CD8-positive, alpha-beta T cell (primary cell): ENCODE measurements at regions of chr13 and their contacts with region 1.

Region 1: GRCh38 chr13:59734393-59734792 is 429.3 kb downstream of the DIAPH3 start:
- DNase-seq: no peak
- ATAC-seq: no peak
- H3K4me3 ChIP-seq: no peak overlapping the region
- H3K4me3 Mint-ChIP-seq: no peak overlapping the region
- H3K27ac ChIP-seq: no peak overlapping the region
- H3K27ac Mint-ChIP-seq: no peak overlapping the region
- H3K4me1 ChIP-seq: no peaks in the 10 kb centered on the region
- H3K4me1 Mint-ChIP-seq: no peaks in the 10 kb centered on the region
- H3K27me3 ChIP-seq: no peaks in the 10 kb centered on the region
- H3K27me3 Mint-ChIP-seq: no peaks in the 10 kb centered on the region
- CTCF ChIP-seq: no peak

Region 2: DNA sequence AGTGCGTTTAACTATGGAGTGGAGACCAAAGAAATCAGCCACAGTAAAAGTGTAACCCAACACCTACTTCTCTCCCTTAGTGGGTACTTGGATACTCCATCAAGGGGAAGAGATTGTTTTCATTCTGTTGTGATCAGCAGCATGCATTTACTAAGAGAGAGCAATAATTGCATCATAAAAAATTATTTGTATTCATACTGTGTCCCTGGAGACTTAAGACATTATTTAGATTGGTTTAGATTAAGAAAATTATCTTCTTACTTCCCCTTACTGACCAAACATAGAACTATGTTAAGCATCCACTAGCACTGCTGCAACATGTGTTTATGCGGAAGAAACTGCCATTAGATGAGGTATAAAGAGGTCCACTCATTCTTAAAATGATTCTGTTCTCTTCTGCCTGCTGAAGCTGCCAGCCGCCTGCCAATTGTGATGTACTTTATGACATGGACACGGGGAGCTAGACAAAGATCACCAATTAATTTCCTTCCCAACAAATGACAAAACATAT is 309.1 kb before region 1 on chr13:
- CTCF ChIA-PET with region 1: no interaction called
- POLR2A ChIA-PET with region 1: no interaction called
- intact Hi-C with region 1: no loop called
- DNase-seq: no peak
- ATAC-seq: no peak
- H3K4me3 ChIP-seq: no peak overlapping the region
- H3K4me3 Mint-ChIP-seq: no peak overlapping the region
- H3K27ac ChIP-seq: no peak overlapping the region
- H3K27ac Mint-ChIP-seq: no peak overlapping the region
- H3K4me1 ChIP-seq: no peaks in the 10 kb centered on the region
- H3K4me1 Mint-ChIP-seq: no peaks in the 10 kb centered on the region
- H3K27me3 ChIP-seq: no peaks in the 10 kb centered on the region
- H3K27me3 Mint-ChIP-seq: peaks cover 4% of the 10 kb centered on the region
- CTCF ChIP-seq: no peak

Region 3: GRCh38 chr13:59706101-59706976 is 28.1 kb before region 1 on chr13:
- CTCF ChIA-PET with region 1: no interaction called
- POLR2A ChIA-PET with region 1: no interaction called
- intact Hi-C with region 1: no loop called
- DNase-seq: no peak
- ATAC-seq: no peak
- H3K4me3 ChIP-seq: no peak overlapping the region
- H3K4me3 Mint-ChIP-seq: no peak overlapping the region
- H3K27ac ChIP-seq: no peak overlapping the region
- H3K27ac Mint-ChIP-seq: no peak overlapping the region
- H3K4me1 ChIP-seq: no peaks in the 10 kb centered on the region
- H3K4me1 Mint-ChIP-seq: no peaks in the 10 kb centered on the region
- H3K27me3 ChIP-seq: no peaks in the 10 kb centered on the region
- H3K27me3 Mint-ChIP-seq: no peaks in the 10 kb centered on the region
- CTCF ChIP-seq: no peak

Region 4: DNA sequence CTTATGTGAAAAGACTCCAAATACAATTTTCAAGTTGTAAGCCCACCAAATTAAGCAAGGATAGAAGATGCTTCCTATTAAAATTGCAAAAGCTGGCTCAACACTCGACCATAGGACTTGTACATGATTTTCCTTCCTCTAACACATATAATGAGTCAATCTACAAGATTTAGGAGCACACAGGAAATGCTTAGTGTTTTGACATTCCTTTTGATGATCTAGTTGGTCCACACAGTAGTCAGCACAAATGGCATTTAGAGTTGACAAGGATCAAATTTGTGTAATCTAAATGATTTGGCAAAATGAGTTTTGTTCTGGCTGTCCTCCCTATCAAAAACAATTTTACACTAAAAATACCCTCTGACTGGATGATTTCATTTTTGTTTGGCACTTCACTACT is 89.1 kb after region 1 on chr13:
- CTCF ChIA-PET with region 1: no interaction called
- POLR2A ChIA-PET with region 1: no interaction called
- intact Hi-C with region 1: no loop called
- DNase-seq: no peak
- ATAC-seq: no peak
- H3K4me3 ChIP-seq: no peak overlapping the region
- H3K4me3 Mint-ChIP-seq: no peak overlapping the region
- H3K27ac ChIP-seq: no peak overlapping the region
- H3K27ac Mint-ChIP-seq: no peak overlapping the region
- H3K4me1 ChIP-seq: no peaks in the 10 kb centered on the region
- H3K4me1 Mint-ChIP-seq: no peaks in the 10 kb centered on the region
- H3K27me3 ChIP-seq: no peaks in the 10 kb centered on the region
- H3K27me3 Mint-ChIP-seq: no peaks in the 10 kb centered on the region
- CTCF ChIP-seq: no peak

Region 5: DNA sequence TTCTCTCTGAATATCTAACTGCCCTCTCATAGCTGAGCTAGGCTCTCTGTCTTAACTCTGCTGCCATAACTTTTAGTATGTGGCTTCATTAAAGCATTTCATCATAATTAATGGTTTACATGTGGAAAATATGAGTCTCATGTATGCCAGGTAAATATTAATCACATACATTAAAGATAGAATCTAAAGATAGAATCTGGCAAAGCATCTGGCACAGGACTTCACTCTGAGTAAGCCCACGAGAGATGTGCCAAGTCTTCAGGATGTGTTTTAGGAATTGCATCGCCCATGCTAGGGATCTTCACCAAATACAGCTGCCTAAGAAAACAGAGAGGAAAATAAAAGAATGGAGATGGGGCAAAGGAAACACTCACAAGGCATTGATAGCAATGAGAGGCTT is 143.5 kb after region 1 on chr13:
- CTCF ChIA-PET with region 1: no interaction called
- POLR2A ChIA-PET with region 1: no interaction called
- intact Hi-C with region 1: loop called in 1 of 2 experiments (anchors 5 kb)
- DNase-seq: no peak
- ATAC-seq: no peak
- H3K4me3 ChIP-seq: no peak overlapping the region
- H3K4me3 Mint-ChIP-seq: no peak overlapping the region
- H3K27ac ChIP-seq: no peak overlapping the region
- H3K27ac Mint-ChIP-seq: no peak overlapping the region
- H3K4me1 ChIP-seq: no peaks in the 10 kb centered on the region
- H3K4me1 Mint-ChIP-seq: no peaks in the 10 kb centered on the region
- H3K27me3 ChIP-seq: no peaks in the 10 kb centered on the region
- H3K27me3 Mint-ChIP-seq: no peaks in the 10 kb centered on the region
- CTCF ChIP-seq: no peak

Region 6: DNA sequence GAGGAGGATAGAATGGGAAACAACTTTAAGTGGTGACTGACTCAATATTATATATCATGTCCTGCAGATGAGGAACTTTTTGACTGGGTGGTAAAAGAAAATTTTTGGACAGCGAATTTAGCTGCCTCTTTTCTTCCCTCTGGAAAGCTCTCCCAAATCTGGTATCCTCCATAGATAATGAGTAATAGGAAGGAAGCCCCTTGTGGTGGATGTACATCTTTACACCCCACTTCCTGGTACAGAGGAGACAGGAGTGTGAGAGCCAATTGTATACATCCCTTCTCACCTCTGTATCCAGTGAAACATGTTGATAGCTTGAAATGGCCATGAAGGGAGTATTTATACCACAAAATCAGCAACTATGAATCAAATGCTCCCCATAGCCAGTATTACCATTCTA is 645.4 kb after region 1 on chr13:
- CTCF ChIA-PET with region 1: no interaction called
- POLR2A ChIA-PET with region 1: no interaction called
- intact Hi-C with region 1: no loop called
- DNase-seq: no peak
- ATAC-seq: no peak
- H3K4me3 ChIP-seq: no peak overlapping the region
- H3K4me3 Mint-ChIP-seq: no peak overlapping the region
- H3K27ac ChIP-seq: no peak overlapping the region
- H3K27ac Mint-ChIP-seq: no peak overlapping the region
- H3K4me1 ChIP-seq: no peaks in the 10 kb centered on the region
- H3K4me1 Mint-ChIP-seq: no peaks in the 10 kb centered on the region
- H3K27me3 ChIP-seq: no peaks in the 10 kb centered on the region
- H3K27me3 Mint-ChIP-seq: peaks cover 10% of the 10 kb centered on the region
- CTCF ChIP-seq: no peak